ENCODE measurements at regions of chr4 and their contacts with region 1.

Region 1: DNA sequence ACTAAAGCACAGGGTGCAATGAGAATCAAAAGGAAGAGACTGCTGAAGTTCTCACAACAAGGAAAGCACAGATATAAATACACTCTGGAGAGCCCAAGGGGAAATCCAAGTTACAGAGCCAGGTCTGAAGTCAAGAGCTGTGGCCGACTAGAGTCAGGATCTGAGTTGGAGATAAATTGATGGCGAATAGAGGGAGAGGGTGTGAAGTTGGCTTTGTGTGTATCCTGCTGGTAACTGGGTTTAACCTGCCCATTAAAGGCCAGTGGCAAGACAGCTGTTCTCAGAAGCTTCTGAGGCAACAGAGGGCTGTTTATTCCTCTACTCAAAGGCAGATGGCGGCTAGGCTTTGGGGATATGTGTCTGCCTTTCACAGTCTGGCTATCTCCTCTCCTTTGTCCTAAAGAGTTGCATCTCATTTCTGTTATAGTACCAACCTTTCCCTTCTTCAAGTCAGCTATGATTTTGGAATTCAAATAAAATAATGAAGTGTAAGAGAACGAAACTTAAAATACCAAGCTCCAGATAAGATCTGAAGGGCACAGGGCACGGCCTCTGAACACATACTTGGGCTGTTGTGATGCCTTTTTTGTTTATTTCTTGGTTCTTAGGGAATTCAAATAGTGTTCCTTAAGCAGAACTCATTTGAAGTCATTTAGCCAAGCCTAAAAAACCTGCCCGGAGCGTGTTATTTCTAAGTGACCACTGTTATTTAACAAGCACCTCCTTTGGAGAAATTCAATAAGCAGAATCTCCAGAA is 142.1 kb downstream of the APBB2 start:
- DNase-seq: no peak
- H3K4me3 ChIP-seq: no peak overlapping the region
- H3K27ac ChIP-seq: no peak overlapping the region
- H3K27me3 ChIP-seq: no peaks in the 10 kb centered on the region
- CTCF ChIP-seq: no peak

Region 2: GRCh38 chr4:41009411-41009810 is 62.8 kb before region 1 on chr4:
- CTCF ChIA-PET with region 1: interaction called, 11 read pairs
- POLR2A ChIA-PET with region 1: no interaction called
- DNase-seq: no peak
- H3K4me3 ChIP-seq: no peak overlapping the region
- H3K27ac ChIP-seq: no peak overlapping the region
- H3K27me3 ChIP-seq: no peaks in the 10 kb centered on the region
- CTCF ChIP-seq: no peak